GM10248 (cell line): ENCODE measurements at regions of chr2 and their contacts with region 1.

Region 1: DNA sequence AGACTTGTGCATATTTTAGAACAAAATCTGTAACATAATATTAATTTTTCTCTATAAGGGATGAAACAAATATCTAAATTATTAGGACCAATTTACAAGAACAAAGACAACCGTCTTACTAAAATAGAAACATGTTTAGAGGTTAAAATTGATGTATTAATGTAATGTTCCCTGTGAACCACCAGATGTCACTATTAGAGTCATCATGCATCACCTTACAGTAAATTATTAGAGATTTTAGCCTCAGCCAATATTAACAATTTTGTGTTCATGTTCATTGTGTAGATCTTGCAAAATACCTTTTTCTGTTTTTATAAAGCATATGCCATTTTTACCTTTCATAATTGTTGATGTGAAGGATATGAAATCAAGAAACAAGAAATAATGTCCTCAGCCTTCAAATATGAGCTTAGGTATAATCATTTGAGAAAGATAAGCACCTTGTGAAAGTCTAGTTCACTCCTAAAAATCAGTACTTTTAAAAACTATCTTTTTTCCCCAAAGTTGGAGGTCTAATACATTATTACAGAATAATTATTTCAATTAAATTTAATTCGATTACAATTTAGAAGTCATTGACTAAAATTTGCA is 344.3 kb upstream of the KCNH7 start:
- DNase-seq: peak; percentile 22
- CTCF ChIP-seq: peak; percentile 60

Region 2: DNA sequence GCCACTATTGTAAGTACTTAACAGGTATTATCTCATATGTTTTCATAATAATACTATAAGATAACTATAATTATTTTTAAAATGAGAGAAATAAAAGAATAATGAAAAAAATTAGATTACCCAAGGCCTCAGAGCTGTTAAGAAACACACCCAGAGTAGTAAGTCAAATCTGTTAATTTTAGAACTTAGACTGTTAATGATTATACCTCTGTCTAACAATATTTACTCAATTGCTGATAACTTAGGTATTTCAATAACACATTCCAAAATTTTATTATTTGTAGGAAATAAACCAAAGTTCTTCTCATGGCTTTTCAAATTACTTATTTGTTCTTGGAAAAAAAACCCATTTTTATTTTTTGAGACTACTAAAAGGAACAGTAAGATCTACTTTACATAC is 116.8 kb before region 1 on chr2:
- CTCF ChIA-PET with region 1: no interaction called
- POLR2A ChIA-PET with region 1: no interaction called
- DNase-seq: no peak
- CTCF ChIP-seq: no peak

Region 3: DNA sequence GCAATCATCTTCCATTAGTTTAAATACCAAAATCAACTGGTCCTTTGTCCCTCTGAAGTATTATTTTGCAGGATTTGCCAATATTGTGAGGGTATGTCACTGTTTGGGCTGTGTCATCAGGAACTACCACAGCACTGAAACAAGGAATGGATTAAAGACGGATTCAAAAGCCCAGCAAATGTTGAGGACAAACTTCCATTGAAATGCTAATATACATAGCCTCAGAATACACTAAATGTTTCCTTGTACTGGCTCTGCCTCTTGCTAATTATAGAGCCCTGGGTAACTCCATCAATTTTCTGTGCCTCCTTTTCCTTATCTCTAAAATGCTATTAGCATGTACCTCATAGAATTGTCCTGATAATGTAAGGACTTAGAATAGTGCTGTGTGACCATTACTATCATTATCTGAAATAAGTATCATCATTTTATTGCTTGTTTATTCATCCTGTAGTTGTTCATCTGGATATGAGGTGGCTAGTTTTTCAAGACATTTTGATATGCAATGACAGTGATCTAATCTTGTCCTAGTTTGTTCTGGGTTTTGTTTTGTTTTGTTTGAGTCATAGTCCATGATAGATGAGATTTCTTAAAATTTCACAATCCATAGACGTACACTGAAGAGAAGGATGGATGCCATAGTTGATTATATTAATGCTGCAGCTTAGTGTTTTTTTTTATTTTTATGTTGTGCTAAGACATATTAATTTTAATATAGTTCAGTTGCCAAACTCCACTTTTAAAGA is 10.9 kb before region 1 on chr2:
- CTCF ChIA-PET with region 1: interaction called, 20 read pairs
- POLR2A ChIA-PET with region 1: no interaction called
- DNase-seq: no peak
- CTCF ChIP-seq: no peak

Region 4: DNA sequence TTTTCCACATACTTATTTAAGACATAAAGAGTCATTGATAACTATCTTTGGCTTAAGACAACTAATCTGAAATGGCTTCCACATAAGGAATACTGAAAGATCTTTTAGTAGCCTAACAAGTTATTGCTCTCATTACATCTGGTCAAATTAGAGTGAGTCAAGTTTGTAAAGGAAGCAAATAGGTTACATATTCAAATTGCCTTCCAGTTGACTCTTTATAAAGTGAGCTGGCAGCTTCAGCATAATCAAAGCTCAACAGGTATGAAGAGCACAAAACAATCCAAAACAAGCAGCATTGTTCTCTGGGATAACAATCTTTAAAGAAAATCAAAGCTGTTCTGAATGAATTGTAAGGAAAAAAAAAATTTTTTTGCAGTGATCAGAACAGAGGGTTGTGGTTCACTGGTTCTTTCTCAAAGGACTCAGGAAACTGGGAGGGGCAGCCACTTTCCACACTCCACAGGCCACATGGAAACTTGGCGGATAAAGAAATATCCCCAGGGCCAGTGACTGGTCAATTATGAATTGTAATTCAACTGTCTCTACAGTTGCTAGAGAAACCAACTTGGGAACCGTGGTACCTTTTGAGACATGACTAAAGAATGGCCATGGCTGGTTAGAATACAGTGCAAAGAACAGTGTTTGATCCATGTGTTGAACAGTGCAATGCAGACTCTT is 25.0 kb after region 1 on chr2:
- CTCF ChIA-PET with region 1: interaction called, 10 read pairs
- POLR2A ChIA-PET with region 1: no interaction called
- DNase-seq: no peak
- CTCF ChIP-seq: no peak

Region 5: GRCh38 chr2:163231666-163232065 is 48.8 kb after region 1 on chr2:
- CTCF ChIA-PET with region 1: no interaction called
- POLR2A ChIA-PET with region 1: no interaction called
- DNase-seq: no peak
- CTCF ChIP-seq: no peak

Region 6: DNA sequence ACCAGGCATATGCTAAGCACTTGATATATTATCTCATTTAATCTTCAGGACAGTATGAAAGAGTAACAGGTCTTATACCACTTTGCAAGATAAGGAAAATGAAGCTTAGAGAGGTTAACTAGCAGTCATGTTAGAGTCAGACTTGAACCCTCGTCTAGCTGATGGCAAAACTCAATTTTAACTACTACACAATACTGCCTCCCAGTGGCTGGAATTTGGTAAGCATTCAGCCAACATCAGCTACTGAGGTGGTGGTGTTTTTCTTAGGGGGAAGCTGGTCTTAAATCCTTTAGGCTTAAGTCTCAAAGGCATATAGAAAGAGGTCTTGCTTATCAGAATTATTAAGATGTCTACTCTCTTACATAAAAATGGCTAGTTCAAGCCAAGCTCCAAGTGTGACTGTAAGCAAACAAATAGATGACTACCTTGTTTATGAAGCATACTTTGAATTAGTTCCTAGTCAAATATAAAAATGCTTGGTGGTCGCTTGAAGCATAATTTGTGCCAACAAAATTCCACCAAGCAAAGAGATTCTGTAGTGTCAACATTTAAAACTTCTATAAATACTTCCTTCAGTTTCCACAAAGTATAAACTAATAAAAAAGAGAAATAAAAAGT is 878.4 kb after region 1 on chr2:
- CTCF ChIA-PET with region 1: interaction called, 17 read pairs
- POLR2A ChIA-PET with region 1: no interaction called
- DNase-seq: peak; percentile 22
- CTCF ChIP-seq: peak; percentile 68